ENCODE measurements at regions of chr9 and their contacts with region 1.

Region 1: GRCh38 chr9:129547869-129548268 is 73.0 kb downstream of the C9orf50 start:
- DNase-seq: peak; percentile 55

Region 2: DNA sequence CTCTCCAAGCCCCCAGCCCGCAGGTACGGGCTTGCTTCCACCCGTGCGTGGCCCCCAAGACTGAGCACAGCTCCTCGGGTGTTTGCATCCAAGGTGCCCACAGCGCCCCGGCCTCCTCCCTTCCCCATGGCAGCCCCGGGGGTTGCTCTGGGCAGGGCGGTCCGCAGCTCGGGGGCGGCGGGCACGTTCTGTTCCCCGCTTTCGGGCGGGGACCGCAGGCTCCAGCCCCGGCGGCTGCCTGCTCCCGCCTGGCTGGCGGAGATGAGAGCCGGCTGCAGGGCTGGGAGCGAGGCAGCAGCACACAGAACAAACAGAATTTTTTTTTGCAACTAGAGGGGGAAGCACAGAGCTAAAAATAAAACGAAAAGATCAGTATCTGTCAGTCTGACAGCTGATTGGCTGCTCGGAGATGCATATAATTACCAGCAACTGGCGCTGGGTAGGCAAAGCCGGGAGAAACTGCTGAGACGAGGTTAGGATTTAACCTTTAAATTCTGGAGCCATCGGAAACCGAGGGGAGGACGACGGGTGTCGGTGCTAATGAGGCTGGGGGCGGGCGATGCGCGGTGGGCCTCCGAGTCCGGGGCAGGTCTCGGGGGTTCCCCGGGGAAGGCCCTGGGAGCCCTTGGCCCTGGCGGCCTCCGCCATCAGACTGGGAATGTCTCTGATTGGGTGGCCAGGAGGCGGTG is 227.2 kb before region 1 on chr9:
- intact Hi-C with region 1: no loop called
- DNase-seq: peak; percentile 85

Region 3: DNA sequence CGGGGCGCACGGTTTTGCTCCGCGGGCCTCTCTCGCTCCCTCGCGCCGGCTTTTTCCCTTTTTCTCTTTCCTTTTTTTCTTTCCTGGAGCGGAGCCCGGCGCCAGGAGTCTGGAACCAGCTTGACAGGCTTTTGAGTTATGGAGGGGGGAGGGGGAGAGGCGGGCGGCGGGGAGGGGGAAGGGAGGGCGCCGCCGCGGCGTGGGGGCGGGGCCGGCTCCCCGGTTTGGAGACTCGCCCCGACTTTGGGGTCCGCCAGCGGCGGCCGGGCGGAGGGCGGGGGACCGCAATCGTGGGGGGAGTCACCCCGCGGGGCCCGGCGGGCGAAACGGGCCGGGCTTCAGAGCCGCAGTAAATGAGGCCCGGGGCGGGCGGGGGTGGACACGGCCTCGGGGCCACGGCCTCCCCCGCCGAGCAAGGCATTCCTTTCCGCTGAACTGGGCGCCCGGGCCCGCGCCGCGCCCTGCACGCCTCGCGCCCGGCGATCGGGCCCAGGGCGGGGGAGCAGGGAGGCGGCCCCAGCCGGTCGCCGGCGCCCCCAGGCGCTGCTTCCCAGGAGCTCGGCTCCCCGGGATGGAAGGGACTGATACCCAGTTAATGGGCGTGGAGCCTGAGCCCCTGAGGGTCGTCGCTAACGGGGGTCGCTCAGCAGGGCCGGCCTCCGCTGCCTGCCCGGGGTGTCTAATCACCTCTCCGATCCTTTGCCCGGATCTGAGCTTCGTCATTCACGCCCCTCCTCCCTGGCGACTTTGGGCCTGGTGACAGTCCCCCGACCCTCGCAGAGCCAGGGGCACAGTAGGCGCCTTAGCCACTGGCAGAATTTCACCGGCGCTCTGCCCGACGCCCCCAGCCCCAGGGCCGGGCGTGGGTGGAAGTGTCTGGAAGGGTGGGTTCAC is 65.1 kb before region 1 on chr9:
- intact Hi-C with region 1: no loop called
- DNase-seq: peak; percentile 89

Region 4: GRCh38 chr9:129505270-129505881 is 42.5 kb before region 1 on chr9:
- intact Hi-C with region 1: loop called (anchors 2 kb)
- DNase-seq: peak; percentile 68

Region 5: GRCh38 chr9:129586685-129587084 is 38.8 kb after region 1 on chr9:
- intact Hi-C with region 1: no loop called
- DNase-seq: no peak

Measured in cardiac septum (tissue), 1 donor.